Breast epithelium (tissue), 4 donors: ENCODE measurements at regions of chr10 and their contacts with region 1.

Region 1: GRCh38 chr10:97355571-97355975 is 21.0 kb upstream of the FRAT2 start:
- DNase-seq: no peak
- H3K4me3 ChIP-seq: no peak overlapping the region
- H3K27ac ChIP-seq: no peak overlapping the region
- H3K4me1 ChIP-seq: no peaks in the 10 kb centered on the region
- H3K27me3 ChIP-seq: no peaks in the 10 kb centered on the region
- CTCF ChIP-seq: peak in 2 of 3 donors; percentile 31 to 55
- POLR2A ChIP-seq: no peak

Region 2: GRCh38 chr10:95440756-95441546 is 1914.6 kb before region 1 on chr10:
- intact Hi-C with region 1: no loop called
- DNase-seq: no peak
- H3K4me3 ChIP-seq: no peak overlapping the region
- H3K27ac ChIP-seq: no peak overlapping the region
- H3K4me1 ChIP-seq: peaks cover 9 to 13% of the 10 kb centered on the region in 2 donors
- H3K27me3 ChIP-seq: no peaks in the 10 kb centered on the region
- CTCF ChIP-seq: no peak
- POLR2A ChIP-seq: no peak

Region 3: GRCh38 chr10:96061232-96061631 is 1294.3 kb before region 1 on chr10:
- intact Hi-C with region 1: no loop called
- DNase-seq: no peak
- H3K4me3 ChIP-seq: no peak overlapping the region
- H3K27ac ChIP-seq: no peak overlapping the region
- H3K4me1 ChIP-seq: no peaks in the 10 kb centered on the region
- H3K27me3 ChIP-seq: no peaks in the 10 kb centered on the region
- CTCF ChIP-seq: no peak
- POLR2A ChIP-seq: no peak

Region 4: DNA sequence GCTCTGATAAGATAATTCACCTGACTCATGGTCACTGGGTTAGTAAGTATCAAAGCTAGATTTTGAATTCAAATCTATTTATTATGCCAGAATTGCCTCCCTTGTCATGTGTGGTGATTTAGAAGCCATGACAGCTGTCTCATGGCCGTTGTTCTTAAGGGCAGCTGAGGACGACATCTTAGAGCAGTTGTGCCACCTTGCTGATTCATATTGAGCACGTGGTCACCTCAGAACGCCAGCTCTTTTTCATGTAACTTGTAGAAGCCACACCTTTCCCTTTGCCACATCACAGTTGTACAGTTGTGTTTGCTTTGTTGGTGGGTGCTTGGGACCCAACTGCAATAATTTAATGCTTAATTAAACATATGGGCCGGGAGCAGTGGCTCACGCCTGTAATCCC is 631.0 kb before region 1 on chr10:
- intact Hi-C with region 1: loop called (anchors 5 kb)
- DNase-seq: no peak
- H3K4me3 ChIP-seq: no peak overlapping the region
- H3K27ac ChIP-seq: no peak overlapping the region
- H3K4me1 ChIP-seq: peaks cover 0 to 8% of the 10 kb centered on the region in 2 donors
- H3K27me3 ChIP-seq: no peaks in the 10 kb centered on the region
- CTCF ChIP-seq: no peak
- POLR2A ChIP-seq: no peak

Region 5: GRCh38 chr10:97400665-97401454 is 45.3 kb after region 1 on chr10 and contains the start of gene RRP12:
- intact Hi-C with region 1: no loop called
- DNase-seq: peak; percentile 71 to 89
- H3K4me3 ChIP-seq: peak within 1 kb of the TSS; percentile 76 to 82 (median 79)
- H3K27ac ChIP-seq: peak within 1 kb of the TSS; percentile 85
- H3K4me1 ChIP-seq: peaks cover 5 to 6% of the 10 kb centered on the region in 2 donors
- H3K27me3 ChIP-seq: no peaks in the 10 kb centered on the region
- CTCF ChIP-seq: peak in 1 of 3 donors; percentile 14
- POLR2A ChIP-seq: peak; percentile 14
- total RNA-seq, gene RRP12: 7.7 to 17.7 (median 15.7) TPM